K562 (cell line): ENCODE measurements at regions of chr6 and their contacts with region 1.

Region 1: GRCh38 chr6:73285674-73286283 is 22.8 kb upstream of the KHDC1 start:
- DNase-seq: peak; percentile 56 to 75 (median 65)
- ATAC-seq: peak; percentile 88
- H3K4me3 ChIP-seq: no peak overlapping the region
- H3K27ac ChIP-seq: no peak overlapping the region
- H3K4me1 ChIP-seq: peaks cover 3 to 10% of the 10 kb centered on the region in 2 experiments; a peak in 4 of 5 replicates
- H3K27me3 ChIP-seq: no peaks in the 10 kb centered on the region
- CTCF ChIP-seq: peak in 2 of 3 experiments; percentile 53 to 58; a peak in 5 of 6 replicates
- EP300 ChIP-seq: peak; percentile 46; the same call in 1 of the 2 replicates
- POLR2A ChIP-seq: no peak
- RAD21 ChIP-seq: peak; percentile 70 to 75

Region 2: DNA sequence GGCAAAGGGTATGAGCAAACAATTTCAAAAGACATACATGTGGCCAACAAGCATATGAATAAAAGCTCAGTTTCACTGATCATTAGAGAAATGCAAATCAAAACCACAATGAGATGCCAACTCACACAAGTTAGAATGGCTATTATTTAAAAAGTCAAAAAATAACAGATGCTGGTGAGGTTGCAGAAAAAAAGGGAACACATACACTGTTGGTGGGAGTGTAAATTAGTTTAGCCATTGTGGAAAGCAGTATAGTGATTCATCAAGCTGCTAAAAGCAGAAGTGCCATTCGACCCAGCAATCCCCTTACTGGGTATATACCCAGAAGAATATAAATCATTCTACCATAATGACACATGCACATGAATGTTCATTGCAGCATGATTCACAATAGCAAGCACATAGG is 53.8 kb before region 1 on chr6:
- CTCF ChIA-PET with region 1: no interaction called
- POLR2A ChIA-PET with region 1: no interaction called
- in situ Hi-C with region 1: no loop called
- intact Hi-C with region 1: no loop called
- DNase-seq: no peak
- ATAC-seq: no peak
- H3K4me3 ChIP-seq: no peak overlapping the region
- H3K27ac ChIP-seq: no peak overlapping the region
- H3K4me1 ChIP-seq: no peaks in the 10 kb centered on the region
- H3K27me3 ChIP-seq: peaks cover 7 to 19% of the 10 kb centered on the region in 2 experiments; a peak in 3 of 5 replicates
- CTCF ChIP-seq: no peak
- EP300 ChIP-seq: no peak
- POLR2A ChIP-seq: no peak
- RAD21 ChIP-seq: no peak

Region 3: GRCh38 chr6:73388800-73389512 is 103.2 kb after region 1 on chr6:
- CTCF ChIA-PET with region 1: interaction called, 4 read pairs
- POLR2A ChIA-PET with region 1: no interaction called
- in situ Hi-C with region 1: no loop called
- intact Hi-C with region 1: loop called (anchors 2 kb)
- DNase-seq: peak; percentile 76 to 93 (median 84)
- ATAC-seq: peak; percentile 97
- H3K4me3 ChIP-seq: peak overlapping the region; percentile 57
- H3K27ac ChIP-seq: peak overlapping the region; percentile 89
- H3K4me1 ChIP-seq: peaks cover 7 to 8% of the 10 kb centered on the region in 2 experiments
- H3K27me3 ChIP-seq: no peaks in the 10 kb centered on the region
- CTCF ChIP-seq: peak; percentile 78 to 82 (median 81)
- EP300 ChIP-seq: peak; percentile 33; the same call in 1 of the 2 replicates
- POLR2A ChIP-seq: peak; percentile 91
- RAD21 ChIP-seq: peak; percentile 58 to 76